Right ventricle myocardium superior (tissue), 1 donor: ENCODE measurements at regions of chr17 and their contacts with region 1.

Region 1: GRCh38 chr17:2214047-2214928 is 89.3 kb downstream of the SMG6 start:
- DNase-seq: peak; percentile 71
- ATAC-seq: peak; percentile 72

Region 2: DNA sequence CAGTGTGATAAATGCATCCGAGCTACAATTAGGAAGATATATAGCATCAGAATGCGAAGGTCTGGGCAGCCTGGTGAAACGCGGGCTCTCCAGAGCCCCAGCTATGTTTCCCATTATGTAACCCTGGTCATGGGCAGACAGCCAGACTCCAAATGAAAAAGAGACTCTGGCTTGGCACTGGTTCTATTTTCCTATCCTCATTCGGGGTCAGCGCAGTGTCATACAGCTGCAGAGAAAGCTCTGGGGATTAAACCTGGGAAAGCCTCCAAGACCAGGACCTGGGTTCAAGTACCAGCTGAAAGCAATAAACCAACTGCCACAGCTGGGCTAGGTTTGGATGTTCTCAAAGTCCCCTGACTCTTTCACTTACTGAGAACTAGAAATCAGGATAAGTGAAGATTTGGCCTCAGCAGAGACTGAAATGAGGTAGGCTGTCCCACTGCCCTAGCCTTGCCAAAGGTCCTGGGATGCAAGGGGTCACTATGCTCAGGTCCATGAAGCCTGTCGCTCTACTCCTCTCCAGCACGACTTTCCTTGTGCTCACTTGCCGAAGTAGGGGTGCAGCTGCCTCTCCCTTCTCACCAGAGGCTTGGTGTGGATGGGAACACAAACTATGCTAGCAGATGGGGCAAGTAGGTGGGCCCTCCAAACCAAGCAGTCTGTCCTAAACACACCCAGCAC is 34.5 kb before region 1 on chr17:
- intact Hi-C with region 1: loop called (anchors 5 kb)
- DNase-seq: peak; percentile 79
- ATAC-seq: peak; percentile 73